Lower leg skin (tissue), 4 donors: ENCODE measurements at regions of chr10 and their contacts with region 1.

Region 1: GRCh38 chr10:98425511-98426352 is 10.8 kb upstream of the PYROXD2 start:
- DNase-seq: peak in 1 of 2 donors; percentile 82
- H3K4me3 ChIP-seq: no peak overlapping the region
- CTCF ChIP-seq: peak in 1 of 3 donors; percentile 10
- POLR2A ChIP-seq: no peak

Region 2: DNA sequence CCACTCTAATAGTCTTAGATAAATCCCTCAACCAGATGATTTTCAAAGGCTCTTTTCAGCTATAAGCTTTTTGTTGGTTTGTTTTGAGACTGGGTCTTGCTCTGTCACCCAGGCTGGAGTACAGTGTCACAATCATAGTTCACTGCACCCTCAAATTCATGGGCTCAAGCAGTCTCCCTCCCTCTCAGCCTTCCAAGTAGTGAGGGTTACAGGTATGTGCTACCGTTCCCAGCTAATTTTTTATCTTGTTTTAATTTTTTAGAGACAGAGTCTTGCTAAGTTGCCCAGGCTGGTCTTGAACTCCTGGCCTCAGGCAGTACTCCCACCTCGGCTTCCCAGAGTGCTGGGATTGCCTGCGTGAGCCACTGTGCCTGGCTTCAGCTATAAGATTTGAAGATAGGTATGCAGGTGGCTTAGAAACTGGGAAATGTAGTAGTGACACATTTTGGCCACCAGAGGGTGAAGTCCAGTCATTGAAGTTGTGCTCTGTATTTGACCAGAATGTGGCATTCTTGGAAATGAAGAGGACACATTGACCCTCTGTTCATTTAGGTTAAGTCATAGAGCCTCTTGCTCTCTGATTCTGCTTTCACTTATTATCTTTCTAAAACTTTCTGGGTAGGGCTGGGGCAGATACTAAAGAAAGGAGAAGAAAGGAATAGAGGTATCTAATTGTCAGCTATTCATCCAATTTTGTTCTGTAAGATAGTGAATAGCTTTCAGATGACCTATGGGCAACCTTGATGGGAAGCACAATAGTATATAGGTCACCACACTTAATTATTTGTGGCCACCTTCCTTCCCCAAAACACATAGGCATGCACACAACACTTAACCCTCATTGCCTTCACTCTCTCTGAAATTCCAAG is 255.2 kb before region 1 on chr10:
- intact Hi-C with region 1: no loop called
- DNase-seq: peak in 1 of 2 donors; percentile 22
- H3K4me3 ChIP-seq: no peak overlapping the region
- CTCF ChIP-seq: no peak
- POLR2A ChIP-seq: no peak

Region 3: GRCh38 chr10:98349508-98349922 is 76.2 kb before region 1 on chr10:
- intact Hi-C with region 1: no loop called
- DNase-seq: peak; percentile 63 to 90
- H3K4me3 ChIP-seq: no peak overlapping the region
- CTCF ChIP-seq: no peak
- POLR2A ChIP-seq: no peak

Region 4: DNA sequence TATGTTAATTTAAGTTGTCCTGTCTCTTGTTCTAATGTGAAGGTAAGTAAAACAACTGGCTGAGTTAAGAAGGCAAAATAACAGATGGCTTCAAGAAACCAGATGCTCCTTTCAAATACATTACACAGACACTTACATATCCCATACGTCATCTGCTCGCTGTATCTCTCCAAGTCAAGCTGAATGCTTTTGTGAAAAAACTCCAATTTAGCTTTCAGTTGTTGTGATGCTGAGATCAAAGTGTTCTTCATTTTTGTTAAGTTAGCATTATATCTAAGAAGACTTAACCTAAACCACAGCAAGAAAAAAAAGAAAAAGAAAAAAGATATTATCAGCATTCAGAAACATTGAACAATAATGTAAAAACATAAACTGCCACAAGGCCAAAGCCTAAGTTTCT is 1778.6 kb after region 1 on chr10:
- intact Hi-C with region 1: loop called (anchors 5 kb)
- DNase-seq: no peak
- H3K4me3 ChIP-seq: no peak overlapping the region
- CTCF ChIP-seq: no peak
- POLR2A ChIP-seq: no peak